ENCODE measurements at regions of chr5 and their contacts with region 1.

Region 1: GRCh38 chr5:43105369-43106289 is 15.1 kb upstream of the ZNF131 start:
- DNase-seq: peak; percentile 92
- H3K4me3 Mint-ChIP-seq: peak overlapping the region; percentile 62
- H3K27ac Mint-ChIP-seq: peak overlapping the region; percentile 80
- H3K4me1 Mint-ChIP-seq: peaks cover 45% of the 10 kb centered on the region
- H3K27me3 Mint-ChIP-seq: no peaks in the 10 kb centered on the region

Region 2: DNA sequence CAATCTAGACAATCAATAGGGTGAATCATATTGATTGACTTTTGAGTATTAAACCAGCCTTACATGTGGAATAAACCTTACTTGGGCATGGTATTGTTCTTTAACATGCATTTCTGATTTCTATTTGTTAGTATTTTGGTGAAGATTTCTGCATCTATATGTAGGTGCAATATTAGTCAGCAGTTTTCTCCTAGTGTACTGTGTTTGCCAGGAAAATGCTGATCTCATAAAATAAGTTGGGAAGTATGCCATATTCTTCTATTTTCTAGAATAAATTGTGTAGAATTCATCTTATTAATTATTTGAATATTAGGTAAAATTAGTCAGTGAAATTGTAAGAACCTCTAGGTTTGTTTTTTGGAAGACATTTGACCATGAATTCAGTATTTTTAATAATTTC is 103.9 kb before region 1 on chr5:
- CTCF ChIA-PET with region 1: no interaction called
- DNase-seq: no peak
- H3K4me3 Mint-ChIP-seq: no peak overlapping the region
- H3K27ac Mint-ChIP-seq: no peak overlapping the region
- H3K4me1 Mint-ChIP-seq: peaks cover 22% of the 10 kb centered on the region
- H3K27me3 Mint-ChIP-seq: peaks cover 21% of the 10 kb centered on the region

Region 3: GRCh38 chr5:43034591-43034968 is 71.0 kb before region 1 on chr5:
- CTCF ChIA-PET with region 1: no interaction called
- DNase-seq: peak; percentile 30
- H3K4me3 Mint-ChIP-seq: peak overlapping the region; percentile 2
- H3K27ac Mint-ChIP-seq: peak overlapping the region; percentile 12
- H3K4me1 Mint-ChIP-seq: peaks cover 41% of the 10 kb centered on the region
- H3K27me3 Mint-ChIP-seq: no peaks in the 10 kb centered on the region

Region 4: GRCh38 chr5:43063731-43064171 is 41.9 kb before region 1 on chr5:
- CTCF ChIA-PET with region 1: no interaction called
- DNase-seq: no peak
- H3K4me3 Mint-ChIP-seq: peak overlapping the region; percentile 26
- H3K27ac Mint-ChIP-seq: peak overlapping the region; percentile 100
- H3K4me1 Mint-ChIP-seq: peaks cover 36% of the 10 kb centered on the region
- H3K27me3 Mint-ChIP-seq: peaks cover 4% of the 10 kb centered on the region

Region 5: DNA sequence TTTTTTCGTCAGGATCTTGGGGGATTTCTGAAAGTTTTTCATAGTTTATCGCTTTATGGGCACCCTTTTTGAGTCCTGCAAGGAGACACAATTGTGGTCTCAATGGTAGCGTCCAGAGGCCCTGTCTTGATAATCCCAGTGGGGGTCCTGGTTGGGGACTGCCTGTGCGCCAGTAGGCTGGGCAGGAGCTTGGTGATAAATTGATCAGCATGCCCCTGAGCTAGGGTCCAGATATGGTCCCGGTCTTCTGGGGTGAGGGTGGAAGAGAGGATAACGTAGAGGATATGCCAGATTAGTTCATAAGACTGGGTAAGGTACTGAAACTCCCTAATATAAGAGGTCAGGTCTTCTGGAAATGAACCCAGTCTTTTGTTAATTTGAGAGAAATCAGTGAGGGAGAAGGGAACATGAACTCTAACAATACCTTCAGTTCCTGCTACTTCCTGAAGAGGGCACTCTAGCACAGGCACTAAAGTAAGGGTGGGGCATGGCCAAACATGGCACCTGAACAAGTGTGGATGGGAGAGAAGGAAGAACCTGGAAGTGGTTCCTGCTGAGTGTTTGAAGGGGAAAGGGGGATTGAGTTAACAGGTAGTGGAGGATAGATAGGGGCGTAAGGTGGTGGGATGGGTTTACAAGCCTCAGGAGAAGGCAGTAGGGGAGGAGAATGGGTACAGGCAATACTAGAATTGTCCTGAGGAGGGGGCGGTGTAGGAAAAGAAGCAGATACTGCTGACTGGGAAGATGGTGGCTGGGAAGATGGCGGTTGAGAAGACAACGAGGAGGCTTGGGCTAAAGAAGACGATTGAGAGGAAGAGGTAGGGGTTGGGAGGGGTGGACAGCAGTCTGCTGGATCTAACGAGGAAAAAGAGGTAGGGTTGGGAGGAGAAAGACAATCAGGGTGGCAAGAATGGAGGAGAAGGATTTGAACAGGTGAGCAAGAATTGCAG is 31.8 kb before region 1 on chr5:
- CTCF ChIA-PET with region 1: interaction called, 24 read pairs
- DNase-seq: peak; percentile 62
- H3K4me3 Mint-ChIP-seq: no peak overlapping the region
- H3K27ac Mint-ChIP-seq: peak overlapping the region; percentile 9
- H3K4me1 Mint-ChIP-seq: peaks cover 49% of the 10 kb centered on the region
- H3K27me3 Mint-ChIP-seq: no peaks in the 10 kb centered on the region

Region 6: DNA sequence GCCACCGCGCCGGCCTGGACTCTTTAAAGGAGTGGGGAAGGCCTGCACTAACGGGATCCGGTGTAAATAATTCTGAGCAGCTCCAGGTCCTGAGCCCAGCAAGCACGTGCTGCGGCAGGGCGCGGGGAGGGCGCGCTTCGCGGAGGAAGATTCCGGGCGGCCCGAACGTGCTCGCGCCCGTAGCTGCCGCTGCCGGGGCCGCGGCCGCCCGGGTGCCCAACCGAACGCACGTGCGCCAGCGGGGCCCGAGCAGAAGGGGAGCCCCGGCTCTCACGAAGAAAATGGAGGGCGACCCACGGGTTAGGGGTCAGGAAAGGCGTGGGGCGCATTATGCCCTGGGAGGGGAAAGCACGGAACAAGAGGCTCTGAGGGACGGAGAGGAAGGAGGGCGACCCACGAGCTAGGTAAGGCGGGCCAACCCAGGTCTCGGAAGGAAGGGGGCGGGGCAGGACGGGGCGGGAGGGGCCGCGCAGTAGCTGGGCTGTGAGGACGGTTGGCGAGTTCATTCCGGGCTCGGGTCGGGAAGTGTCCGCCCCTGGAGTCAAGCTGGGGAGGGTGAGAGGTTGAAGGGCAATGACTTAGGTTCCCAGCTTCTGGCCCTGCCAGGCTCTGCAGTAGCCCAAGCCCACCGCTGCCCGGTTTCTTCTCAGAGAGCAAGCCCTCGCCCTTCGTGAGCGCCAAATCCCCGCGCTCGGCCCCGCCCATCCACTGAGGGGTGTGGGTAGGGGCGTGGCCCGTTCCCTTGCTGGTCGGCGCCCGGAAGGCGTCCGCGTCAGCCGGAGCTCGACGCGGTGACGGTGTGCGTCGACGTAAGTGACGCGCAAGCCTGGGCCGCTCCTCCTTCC is 15.3 kb after region 1 on chr5 and contains the start of gene ZNF131:
- CTCF ChIA-PET with region 1: interaction called, 69 read pairs
- DNase-seq: peak; percentile 97
- H3K4me3 Mint-ChIP-seq: peak within 1 kb of the TSS; percentile 90
- H3K27ac Mint-ChIP-seq: peak within 1 kb of the TSS; percentile 96
- H3K4me1 Mint-ChIP-seq: peaks cover 38% of the 10 kb centered on the region
- H3K27me3 Mint-ChIP-seq: peaks cover 5% of the 10 kb centered on the region

Region 7: GRCh38 chr5:43313035-43313853 is 207.6 kb after region 1 on chr5 and contains the start of gene HMGCS1:
- CTCF ChIA-PET with region 1: interaction called, 10 read pairs
- DNase-seq: peak; percentile 100
- H3K4me3 Mint-ChIP-seq: peak within 1 kb of the TSS; percentile 99
- H3K27ac Mint-ChIP-seq: peak within 1 kb of the TSS; percentile 90
- H3K4me1 Mint-ChIP-seq: peaks cover 61% of the 10 kb centered on the region
- H3K27me3 Mint-ChIP-seq: no peaks in the 10 kb centered on the region

Measured in activated naive CD4-positive, alpha-beta T cell treated with anti-CD3 and anti-CD28 coated beads, Interleukin-2, amount 10 ng/mL, durations not matched to agents 7 days and 5 days (primary cell).